Breast epithelium (tissue), 4 donors: ENCODE measurements at regions of chr9 and their contacts with region 1.

Region 1: DNA sequence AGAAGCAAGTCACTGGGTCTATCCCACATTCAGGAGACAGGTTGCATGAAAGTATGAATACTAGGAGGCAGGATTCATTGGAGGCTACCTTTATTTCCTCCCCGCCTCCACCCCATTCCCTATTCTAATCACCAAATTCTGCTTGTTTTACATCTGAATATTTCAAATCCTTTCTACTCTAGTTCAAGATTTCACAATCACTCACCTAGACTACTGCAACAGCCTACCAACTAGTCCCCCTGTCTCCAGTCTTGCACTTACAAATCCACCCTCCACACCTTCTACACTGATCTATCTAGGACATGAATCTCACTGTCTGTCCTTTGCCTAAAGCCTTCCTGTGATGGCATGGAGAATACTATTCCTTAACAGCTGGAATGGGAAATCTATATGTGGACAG is 6.4 kb upstream of the KIF27 start:
- DNase-seq: no peak
- H3K4me3 ChIP-seq: no peak overlapping the region
- H3K27ac ChIP-seq: no peak overlapping the region
- H3K4me1 ChIP-seq: no peaks in the 10 kb centered on the region
- H3K27me3 ChIP-seq: no peaks in the 10 kb centered on the region
- CTCF ChIP-seq: no peak
- POLR2A ChIP-seq: no peak

Region 2: GRCh38 chr9:83956434-83957247 is 29.1 kb after region 1 on chr9:
- intact Hi-C with region 1: loop called (anchors 1 kb)
- DNase-seq: peak; percentile 41 to 75
- H3K4me3 ChIP-seq: peak overlapping the region; percentile 70 to 89 (median 77)
- H3K27ac ChIP-seq: peak overlapping the region; percentile 90 to 91
- H3K4me1 ChIP-seq: no peaks in the 10 kb centered on the region
- H3K27me3 ChIP-seq: no peaks in the 10 kb centered on the region
- CTCF ChIP-seq: no peak
- POLR2A ChIP-seq: no peak